Panc1 (cell line): ENCODE measurements at regions of chr10 and their contacts with region 1.

Region 1: GRCh38 chr10:51358227-51358626 is 283.9 kb downstream of the PRKG1 start:
- DNase-seq: no peak
- ATAC-seq: no peak
- H3K4me3 ChIP-seq: no peak overlapping the region
- H3K27ac ChIP-seq: no peak overlapping the region
- H3K4me1 ChIP-seq: no peaks in the 10 kb centered on the region
- H3K27me3 ChIP-seq: no peaks in the 10 kb centered on the region
- CTCF ChIP-seq: no peak

Region 2: GRCh38 chr10:52984169-52984568 is 1625.9 kb after region 1 on chr10:
- CTCF ChIA-PET with region 1: no interaction called
- POLR2A ChIA-PET with region 1: no interaction called
- in situ Hi-C with region 1: no loop called
- intact Hi-C with region 1: loop called (anchors 5 kb)
- DNase-seq: no peak
- ATAC-seq: no peak
- H3K4me3 ChIP-seq: no peak overlapping the region
- H3K27ac ChIP-seq: no peak overlapping the region
- H3K4me1 ChIP-seq: no peaks in the 10 kb centered on the region
- H3K27me3 ChIP-seq: no peaks in the 10 kb centered on the region
- CTCF ChIP-seq: no peak